Activated naive CD4-positive, alpha-beta T cell treated with anti-CD3 and anti-CD28 coated beads for 36 hours (primary cell): ENCODE measurements at regions of chr6 and their contacts with region 1.

Region 1: DNA sequence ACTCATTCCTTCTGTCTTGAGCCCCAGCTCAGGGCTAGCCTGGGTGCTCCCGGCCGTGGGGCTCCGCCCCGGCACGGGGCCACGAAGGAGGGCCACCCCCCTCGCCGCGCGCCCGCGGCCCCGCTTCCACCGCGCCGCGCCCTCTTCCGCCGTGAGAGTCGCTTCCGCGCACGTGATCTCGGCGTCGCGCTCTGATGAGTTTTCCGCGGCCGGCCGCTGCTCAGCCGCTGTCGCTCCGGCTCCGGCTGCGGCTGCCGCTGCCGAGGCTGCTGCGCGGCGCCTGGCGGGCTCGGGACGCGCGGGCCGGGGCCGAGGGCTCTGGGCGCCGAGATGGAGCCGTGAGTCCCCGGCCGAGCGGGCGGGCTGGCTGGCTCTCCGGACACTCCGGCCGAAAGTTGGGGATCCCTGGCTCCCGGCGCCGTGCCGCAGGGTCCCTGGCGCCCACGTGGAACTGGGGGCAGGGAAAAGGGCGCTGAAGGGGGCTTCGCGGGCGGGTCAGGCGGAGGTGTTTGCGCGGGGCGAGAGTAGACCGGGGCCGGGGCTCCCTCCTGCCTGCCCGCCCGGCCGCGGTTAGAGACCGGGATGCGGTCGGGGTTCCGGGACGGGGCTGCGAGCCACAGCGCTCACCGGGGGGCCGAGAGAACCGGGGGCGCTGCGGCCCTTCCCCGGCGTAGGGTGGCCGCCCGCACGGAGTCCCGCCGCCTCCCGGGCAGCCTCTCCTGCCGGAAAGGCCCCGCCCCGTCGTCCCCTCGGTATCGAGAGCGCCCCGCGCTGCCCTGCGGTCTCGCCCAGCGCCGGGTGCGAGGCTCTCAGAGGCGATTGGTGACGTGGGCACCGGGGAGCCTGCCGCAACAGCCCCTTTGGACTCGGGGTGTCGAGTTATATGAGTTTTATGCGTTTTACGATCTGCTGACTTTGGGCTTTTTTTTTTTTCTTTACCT is at the start of gene TMEM181:
- DNase-seq: peak; percentile 90
- H3K4me3 Mint-ChIP-seq: peak within 1 kb of the TSS; percentile 93
- H3K27ac Mint-ChIP-seq: peak within 1 kb of the TSS; percentile 84
- H3K4me1 Mint-ChIP-seq: peaks cover 35% of the 10 kb centered on the region
- H3K27me3 Mint-ChIP-seq: no peaks in the 10 kb centered on the region
- total RNA-seq, gene TMEM181: 8.3 to 8.6 TPM

Region 2: DNA sequence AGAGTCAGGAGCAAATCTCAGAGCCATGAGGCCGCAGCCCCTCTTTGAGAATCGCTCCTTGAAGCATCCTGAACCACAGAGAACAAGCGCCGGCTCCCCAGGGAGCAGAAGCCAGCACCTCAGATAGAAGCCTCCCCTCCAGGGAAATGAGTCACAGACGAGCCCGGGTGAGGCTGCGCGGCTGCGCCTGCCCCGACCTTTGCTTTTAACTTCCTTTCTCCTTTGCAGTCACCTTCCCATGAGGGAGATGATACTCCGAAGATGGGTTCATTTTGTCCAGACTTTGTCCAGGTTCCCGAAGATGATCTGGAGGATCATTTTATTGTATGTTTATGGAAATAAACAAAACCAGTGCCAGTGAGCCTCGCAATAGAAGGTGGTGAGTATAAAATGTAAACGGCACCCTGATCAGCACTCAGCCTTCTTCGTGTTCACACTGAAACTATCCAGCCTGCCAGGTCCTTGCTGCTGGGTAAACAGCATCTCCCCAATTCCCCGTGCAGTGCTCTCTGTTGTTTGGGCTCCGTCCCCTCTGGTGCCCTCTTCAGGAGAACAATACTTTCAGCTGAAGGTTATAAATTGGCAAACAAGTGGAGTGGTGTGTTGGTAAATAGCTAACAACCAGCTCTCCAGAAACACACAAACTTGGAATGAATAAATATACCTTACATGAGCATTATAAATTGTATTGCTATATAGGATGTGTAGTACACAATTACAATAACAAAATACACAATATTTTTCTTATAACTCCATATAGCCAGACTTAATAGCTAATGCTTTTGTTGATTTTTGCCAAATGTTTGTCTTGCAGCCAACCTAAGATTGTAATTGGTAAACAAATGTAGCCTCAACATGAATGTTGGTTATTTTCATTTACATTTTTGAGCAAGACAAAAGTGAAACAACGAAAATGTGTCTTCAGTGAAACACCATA is 41.7 kb before region 1 on chr6:
- CTCF ChIA-PET with region 1: no interaction called
- intact Hi-C with region 1: loop called (anchors 1 kb)
- DNase-seq: peak; percentile 76
- H3K4me3 Mint-ChIP-seq: peak overlapping the region; percentile 79
- H3K27ac Mint-ChIP-seq: peak overlapping the region; percentile 79
- H3K4me1 Mint-ChIP-seq: peaks cover 38% of the 10 kb centered on the region
- H3K27me3 Mint-ChIP-seq: peaks cover 16% of the 10 kb centered on the region

Region 3: GRCh38 chr6:158536084-158536890 is 23.9 kb before region 1 on chr6:
- CTCF ChIA-PET with region 1: no interaction called
- intact Hi-C with region 1: no loop called
- DNase-seq: peak; percentile 77
- H3K4me3 Mint-ChIP-seq: peak overlapping the region; percentile 56
- H3K27ac Mint-ChIP-seq: no peak overlapping the region
- H3K4me1 Mint-ChIP-seq: no peaks in the 10 kb centered on the region
- H3K27me3 Mint-ChIP-seq: peaks cover 38% of the 10 kb centered on the region

Region 4: GRCh38 chr6:158575550-158575949 is 15.4 kb after region 1 on chr6:
- CTCF ChIA-PET with region 1: no interaction called
- intact Hi-C with region 1: no loop called
- DNase-seq: no peak
- H3K4me3 Mint-ChIP-seq: no peak overlapping the region
- H3K27ac Mint-ChIP-seq: no peak overlapping the region
- H3K4me1 Mint-ChIP-seq: peaks cover 30% of the 10 kb centered on the region
- H3K27me3 Mint-ChIP-seq: no peaks in the 10 kb centered on the region

Region 5: DNA sequence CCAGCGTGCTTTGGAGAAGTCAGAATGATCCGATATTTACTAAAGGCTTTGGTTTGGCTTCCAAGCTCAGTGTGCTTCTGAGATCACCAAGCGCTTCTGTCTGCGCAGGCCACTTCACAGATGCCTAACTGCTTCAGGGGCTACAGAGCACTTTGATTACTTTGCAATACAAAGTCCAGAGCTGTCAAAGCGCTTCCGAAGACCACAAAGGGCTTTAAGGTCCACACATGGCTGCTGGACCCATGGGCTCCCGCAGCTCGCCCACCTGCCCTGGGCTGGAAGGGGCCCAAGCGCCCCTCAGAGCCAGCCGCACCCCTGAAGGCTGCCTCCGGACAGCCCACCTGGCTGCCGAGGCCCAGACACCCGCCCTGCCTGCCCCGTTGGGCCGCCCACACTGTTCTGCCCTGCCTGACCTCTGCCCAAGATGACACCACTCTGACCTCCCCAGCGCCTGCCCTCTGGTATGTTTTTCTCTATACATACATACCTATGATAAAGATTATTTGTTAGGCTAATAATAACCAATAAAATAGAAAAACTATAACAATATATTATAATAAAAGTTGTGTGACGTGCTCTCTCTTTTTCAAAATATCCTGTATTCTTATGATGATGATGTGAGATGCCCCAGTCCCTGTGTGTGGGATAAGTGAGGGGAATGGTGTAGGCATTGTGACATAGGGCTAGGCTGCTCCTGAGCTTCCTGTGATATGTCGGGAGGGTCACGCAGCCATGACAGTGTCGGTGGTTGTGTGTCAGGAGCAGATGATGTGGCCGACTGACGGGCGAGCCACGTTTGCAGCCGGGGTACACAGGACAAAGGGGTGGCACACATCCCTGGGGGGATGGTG is 61.8 kb after region 1 on chr6:
- CTCF ChIA-PET with region 1: no interaction called
- intact Hi-C with region 1: no loop called
- DNase-seq: no peak
- H3K4me3 Mint-ChIP-seq: no peak overlapping the region
- H3K27ac Mint-ChIP-seq: peak overlapping the region; percentile 67
- H3K4me1 Mint-ChIP-seq: peaks cover 14% of the 10 kb centered on the region
- H3K27me3 Mint-ChIP-seq: no peaks in the 10 kb centered on the region